ENCODE measurements at regions of chr1 and their contacts with region 1.

Region 1: DNA sequence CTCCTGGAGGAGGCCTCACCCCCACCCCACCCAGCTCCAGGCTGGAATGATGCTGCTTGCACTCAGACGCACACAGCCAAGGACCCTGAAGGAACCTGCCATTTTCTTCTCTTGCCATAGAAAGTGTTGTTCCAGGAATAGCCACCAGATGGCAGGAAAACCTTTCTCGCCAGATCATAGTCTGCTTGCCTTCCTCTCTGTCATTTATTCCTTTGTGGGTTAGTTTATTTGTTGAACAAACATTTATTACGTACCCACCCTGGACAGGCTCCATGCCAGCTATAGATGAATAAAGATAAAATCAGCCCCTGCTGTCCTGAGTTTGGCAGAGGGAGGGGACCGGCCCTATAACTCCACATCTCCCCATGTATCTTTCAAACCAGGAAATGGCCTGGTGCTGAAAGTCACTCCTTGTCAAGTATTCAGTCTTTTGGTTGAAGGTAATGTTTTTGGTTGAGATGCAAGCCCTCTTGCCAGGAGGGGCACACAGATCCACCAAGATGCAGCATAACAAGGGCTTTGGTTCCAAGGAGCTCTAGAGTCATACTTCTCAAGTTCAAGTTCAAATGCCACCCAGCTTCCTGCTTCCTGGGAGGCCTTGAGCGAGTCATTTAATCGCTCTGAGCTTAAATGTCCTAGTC is 7.0 kb upstream of the KCNC4 start:
- DNase-seq: no peak
- H3K4me3 ChIP-seq: no peak overlapping the region
- H3K27ac ChIP-seq: no peak overlapping the region
- H3K4me1 ChIP-seq: peaks cover 0 to 7% (median 0%) of the 10 kb centered on the region in 3 donors
- H3K27me3 ChIP-seq: no peaks in the 10 kb centered on the region
- CTCF ChIP-seq: peak; percentile 73 to 96 (median 86)
- POLR2A ChIP-seq: no peak

Region 2: DNA sequence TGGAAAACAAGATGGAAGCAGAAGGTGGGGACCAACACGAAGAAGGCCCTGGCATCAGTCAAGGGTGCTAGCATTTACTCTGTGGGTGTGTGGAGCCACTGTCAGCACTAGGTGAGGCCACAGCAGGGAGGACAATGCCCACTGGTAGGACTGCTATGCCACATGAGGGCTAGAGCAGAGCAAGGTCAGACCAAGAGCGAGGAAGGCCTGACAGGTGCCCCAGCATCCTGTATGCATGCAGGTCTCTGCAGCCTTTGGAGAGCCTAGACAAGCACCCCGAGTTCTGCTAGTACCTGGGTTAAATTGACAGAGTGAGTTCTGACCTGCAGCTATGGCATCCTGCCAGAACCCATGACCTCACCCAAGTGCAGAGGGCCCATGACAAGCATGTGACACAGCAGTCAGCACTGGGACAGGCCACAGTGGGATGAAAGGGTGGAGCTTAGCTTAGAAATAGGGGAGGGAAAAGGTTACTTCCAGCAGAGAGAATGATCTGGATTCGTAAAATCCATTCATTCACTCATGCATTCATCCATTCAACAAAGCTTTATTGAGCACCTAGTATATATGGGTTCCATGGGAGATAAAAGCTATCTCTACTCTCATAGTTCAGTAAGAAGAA is 301.5 kb before region 1 on chr1:
- intact Hi-C with region 1: no loop called
- DNase-seq: no peak
- H3K4me3 ChIP-seq: no peak overlapping the region
- H3K27ac ChIP-seq: no peak overlapping the region
- H3K4me1 ChIP-seq: peaks cover 0 to 24% (median 11%) of the 10 kb centered on the region in 3 donors
- H3K27me3 ChIP-seq: no peaks in the 10 kb centered on the region
- CTCF ChIP-seq: no peak
- POLR2A ChIP-seq: no peak

Region 3: DNA sequence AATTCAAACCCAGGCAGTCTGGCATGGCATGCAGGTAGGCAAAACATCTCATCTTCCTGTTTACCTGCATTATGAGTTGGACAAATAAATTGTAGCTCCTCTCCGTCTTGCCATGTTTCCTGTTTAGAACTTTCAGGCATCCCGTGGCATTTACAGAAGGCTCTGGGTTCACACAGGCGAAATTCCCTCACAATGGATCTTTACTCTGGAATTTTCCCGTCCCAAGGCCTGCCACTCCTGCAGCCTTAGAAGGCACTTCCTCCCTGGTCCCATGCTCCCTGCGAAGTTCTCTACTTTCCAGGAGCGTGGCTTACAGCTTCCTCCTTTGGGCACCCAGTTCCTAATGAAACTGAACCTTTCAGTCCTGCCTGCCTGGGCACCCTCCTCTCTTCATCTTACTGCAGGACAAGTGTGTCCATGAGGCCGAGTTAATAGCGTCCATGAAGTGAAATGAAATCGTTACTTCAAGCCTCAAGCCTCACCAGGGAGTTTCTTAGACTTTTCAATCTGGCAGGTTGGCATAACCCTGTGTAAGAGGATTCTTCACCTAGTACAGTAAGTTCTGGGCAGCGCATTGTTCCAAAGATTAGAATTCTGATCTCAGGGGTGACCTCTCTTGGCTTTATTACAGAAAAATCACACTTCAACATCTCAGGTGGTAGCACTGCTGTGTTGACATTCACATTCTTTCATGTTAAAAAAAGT is 255.4 kb before region 1 on chr1:
- intact Hi-C with region 1: no loop called
- DNase-seq: no peak
- H3K4me3 ChIP-seq: no peak overlapping the region
- H3K27ac ChIP-seq: peak overlapping the region in 1 of 4 donors; percentile 33
- H3K4me1 ChIP-seq: peaks cover 0 to 4% (median 0%) of the 10 kb centered on the region in 3 donors
- H3K27me3 ChIP-seq: no peaks in the 10 kb centered on the region
- CTCF ChIP-seq: no peak
- POLR2A ChIP-seq: no peak

Region 4: DNA sequence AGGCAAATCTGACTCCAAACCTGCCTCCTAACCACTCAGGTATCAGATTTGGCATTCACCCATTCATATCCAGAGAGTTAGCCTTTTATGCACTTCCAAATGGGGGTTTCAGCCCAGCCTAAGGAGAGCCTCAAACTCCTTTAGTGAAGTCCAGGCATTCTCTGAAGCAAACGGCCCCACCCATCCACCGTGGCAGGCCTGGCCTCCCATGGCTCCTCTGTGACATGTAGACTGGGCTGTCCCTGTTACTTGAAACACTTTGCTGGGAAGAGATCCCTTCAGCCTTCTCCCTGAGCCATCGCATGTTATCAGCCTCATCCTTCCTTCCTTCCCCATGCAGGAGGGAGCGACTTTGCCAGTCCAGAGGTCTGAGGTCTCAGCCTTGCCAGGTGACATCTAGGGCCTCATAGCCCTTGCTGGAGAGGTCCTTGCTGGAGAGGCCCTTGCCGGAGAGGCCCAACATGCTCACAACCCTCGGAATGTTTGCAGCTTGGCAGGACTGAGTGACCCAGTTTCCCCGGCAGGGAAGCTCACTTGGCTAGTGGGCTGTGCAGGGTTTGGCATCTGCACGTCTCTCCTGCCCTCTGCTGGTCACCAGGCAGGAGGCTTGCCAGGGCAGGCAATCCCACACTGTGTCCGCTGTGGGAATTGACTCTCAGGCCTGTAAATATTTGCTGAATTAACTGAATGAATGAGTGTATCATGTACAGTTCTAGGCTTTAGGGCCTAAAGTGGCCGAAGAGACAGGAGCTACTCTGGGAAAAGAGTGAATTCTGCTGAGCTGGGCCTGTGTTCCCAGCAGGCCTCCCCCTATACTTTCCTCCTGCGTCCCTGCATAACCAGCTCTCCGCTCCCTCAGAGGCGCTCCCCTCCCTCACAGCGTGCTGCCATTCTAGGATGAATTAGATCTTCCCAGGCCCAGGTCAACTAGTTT is 109.3 kb after region 1 on chr1:
- intact Hi-C with region 1: loop called (anchors 2 kb)
- DNase-seq: no peak
- H3K4me3 ChIP-seq: no peak overlapping the region
- H3K27ac ChIP-seq: no peak overlapping the region
- H3K4me1 ChIP-seq: peaks cover 0 to 8% (median 3%) of the 10 kb centered on the region in 3 donors
- H3K27me3 ChIP-seq: no peaks in the 10 kb centered on the region
- CTCF ChIP-seq: peak; percentile 77 to 96 (median 91)
- POLR2A ChIP-seq: no peak